CD4-positive, alpha-beta T cell (primary cell): ENCODE measurements at regions of chr1 and their contacts with region 1.

Region 1: GRCh38 chr1:156226116-156226538 is 13.3 kb downstream of the PMF1 start:
- DNase-seq: no peak
- ATAC-seq: no peak
- H3K4me3 ChIP-seq: no peak overlapping the region
- H3K4me3 Mint-ChIP-seq: no peak overlapping the region
- H3K27ac ChIP-seq: no peak overlapping the region
- H3K27ac Mint-ChIP-seq: no peak overlapping the region
- H3K4me1 ChIP-seq: peaks cover 28% of the 10 kb centered on the region
- H3K4me1 Mint-ChIP-seq: peaks cover 29% of the 10 kb centered on the region
- H3K27me3 ChIP-seq: no peaks in the 10 kb centered on the region
- H3K27me3 Mint-ChIP-seq: no peaks in the 10 kb centered on the region
- CTCF ChIP-seq: no peak

Region 2: GRCh38 chr1:156090822-156091188 is 135.3 kb before region 1 on chr1:
- CTCF ChIA-PET with region 1: interaction called, 43 read pairs
- POLR2A ChIA-PET with region 1: interaction called, 3 read pairs
- intact Hi-C with region 1: loop called (anchors 1 kb)
- DNase-seq: peak; percentile 84 to 96 (median 90)
- ATAC-seq: peak; percentile 98
- H3K4me3 ChIP-seq: no peak overlapping the region
- H3K4me3 Mint-ChIP-seq: no peak overlapping the region
- H3K27ac ChIP-seq: no peak overlapping the region
- H3K27ac Mint-ChIP-seq: no peak overlapping the region
- H3K4me1 ChIP-seq: peaks cover 18% of the 10 kb centered on the region
- H3K4me1 Mint-ChIP-seq: peaks cover 3% of the 10 kb centered on the region
- H3K27me3 ChIP-seq: peaks cover 0 to 7% of the 10 kb centered on the region in 2 experiments
- H3K27me3 Mint-ChIP-seq: peaks cover 28% of the 10 kb centered on the region
- CTCF ChIP-seq: peak; percentile 80

Region 3: DNA sequence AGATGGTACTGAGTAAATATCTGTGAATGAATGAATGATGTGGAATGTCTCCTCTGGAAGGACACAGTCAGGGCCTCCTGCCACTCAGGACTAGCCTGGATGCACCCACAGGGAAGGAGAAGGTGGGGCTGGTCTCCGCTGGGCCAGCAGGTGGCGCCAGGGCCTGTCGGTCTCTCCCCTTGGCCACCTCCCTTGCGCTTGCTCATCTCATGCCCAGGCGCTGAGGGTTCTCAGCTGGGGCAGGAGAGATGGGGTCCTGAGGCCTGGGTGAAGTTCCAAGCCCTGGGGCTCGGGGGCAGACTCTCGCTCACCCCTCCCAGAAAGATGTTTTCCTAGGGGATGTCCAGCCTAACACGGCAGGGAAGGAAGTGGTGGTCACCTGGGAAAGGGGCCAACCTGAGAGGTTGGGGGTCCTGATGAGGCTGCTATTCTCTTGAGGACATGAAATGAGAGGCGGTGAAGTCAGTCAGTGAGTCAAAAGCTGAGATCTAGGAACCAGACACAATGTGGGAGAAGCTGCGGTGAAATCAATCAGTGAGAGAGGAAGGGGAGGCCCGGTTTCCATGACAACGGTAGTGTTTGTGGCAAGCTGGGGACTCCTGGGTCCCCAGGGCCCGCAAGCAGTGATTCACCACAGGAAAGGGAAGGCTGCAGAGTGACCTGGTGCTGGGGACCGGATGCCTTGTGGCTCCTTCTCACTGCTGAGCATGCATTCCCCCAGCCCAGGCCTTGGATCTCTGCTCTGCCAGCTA is 129.3 kb before region 1 on chr1:
- CTCF ChIA-PET with region 1: interaction called, 43 read pairs
- POLR2A ChIA-PET with region 1: interaction called, 4 read pairs
- intact Hi-C with region 1: no loop called
- DNase-seq: peak; percentile 73 to 99 (median 83)
- ATAC-seq: peak; percentile 78
- H3K4me3 ChIP-seq: peak overlapping the region; percentile 21
- H3K4me3 Mint-ChIP-seq: peak overlapping the region; percentile 26
- H3K27ac ChIP-seq: peak overlapping the region; percentile 51 to 89
- H3K27ac Mint-ChIP-seq: peak overlapping the region; percentile 82
- H3K4me1 ChIP-seq: peaks cover 39% of the 10 kb centered on the region
- H3K4me1 Mint-ChIP-seq: peaks cover 39% of the 10 kb centered on the region
- H3K27me3 ChIP-seq: no peaks in the 10 kb centered on the region
- H3K27me3 Mint-ChIP-seq: peaks cover 4% of the 10 kb centered on the region
- CTCF ChIP-seq: peak; percentile 93

Region 4: GRCh38 chr1:156129706-156130581 is 96.2 kb before region 1 on chr1:
- CTCF ChIA-PET with region 1: interaction called, 16 read pairs
- POLR2A ChIA-PET with region 1: no interaction called
- intact Hi-C with region 1: no loop called
- DNase-seq: peak; percentile 60 to 87 (median 72)
- ATAC-seq: no peak
- H3K4me3 ChIP-seq: no peak overlapping the region
- H3K4me3 Mint-ChIP-seq: peak overlapping the region; percentile 60
- H3K27ac ChIP-seq: no peak overlapping the region
- H3K27ac Mint-ChIP-seq: peak overlapping the region; percentile 78
- H3K4me1 ChIP-seq: peaks cover 58% of the 10 kb centered on the region
- H3K4me1 Mint-ChIP-seq: peaks cover 50% of the 10 kb centered on the region
- H3K27me3 ChIP-seq: no peaks in the 10 kb centered on the region
- H3K27me3 Mint-ChIP-seq: no peaks in the 10 kb centered on the region
- CTCF ChIP-seq: peak; percentile 92

Region 5: DNA sequence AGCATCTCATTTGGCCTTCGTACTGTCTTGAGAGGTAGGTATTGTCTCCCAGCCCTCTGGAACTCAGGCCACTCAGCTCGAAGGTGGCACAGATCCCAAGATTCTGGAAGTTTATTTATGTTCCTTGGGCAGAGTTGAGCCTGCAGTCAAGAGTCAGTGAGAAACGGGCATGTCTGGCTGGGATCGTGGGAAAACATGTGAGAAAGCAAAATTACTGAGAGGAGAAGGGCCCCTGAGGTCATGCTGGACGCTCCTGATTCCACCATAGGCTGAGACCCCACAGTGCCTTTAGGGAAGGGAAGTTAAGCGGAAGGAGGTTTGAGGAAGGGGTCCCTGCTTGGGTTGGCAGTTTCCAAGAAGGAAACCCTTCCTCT is 85.3 kb before region 1 on chr1:
- CTCF ChIA-PET with region 1: interaction called, 31 read pairs
- POLR2A ChIA-PET with region 1: interaction called, 16 read pairs
- intact Hi-C with region 1: loop called (anchors 1 kb)
- DNase-seq: no peak
- ATAC-seq: peak; percentile 1
- H3K4me3 ChIP-seq: no peak overlapping the region
- H3K4me3 Mint-ChIP-seq: peak overlapping the region; percentile 25
- H3K27ac ChIP-seq: no peak overlapping the region
- H3K27ac Mint-ChIP-seq: peak overlapping the region; percentile 5
- H3K4me1 ChIP-seq: peaks cover 2% of the 10 kb centered on the region
- H3K4me1 Mint-ChIP-seq: peaks cover 2% of the 10 kb centered on the region
- H3K27me3 ChIP-seq: no peaks in the 10 kb centered on the region
- H3K27me3 Mint-ChIP-seq: peaks cover under 1% of the 10 kb centered on the region
- CTCF ChIP-seq: no peak

Region 6: DNA sequence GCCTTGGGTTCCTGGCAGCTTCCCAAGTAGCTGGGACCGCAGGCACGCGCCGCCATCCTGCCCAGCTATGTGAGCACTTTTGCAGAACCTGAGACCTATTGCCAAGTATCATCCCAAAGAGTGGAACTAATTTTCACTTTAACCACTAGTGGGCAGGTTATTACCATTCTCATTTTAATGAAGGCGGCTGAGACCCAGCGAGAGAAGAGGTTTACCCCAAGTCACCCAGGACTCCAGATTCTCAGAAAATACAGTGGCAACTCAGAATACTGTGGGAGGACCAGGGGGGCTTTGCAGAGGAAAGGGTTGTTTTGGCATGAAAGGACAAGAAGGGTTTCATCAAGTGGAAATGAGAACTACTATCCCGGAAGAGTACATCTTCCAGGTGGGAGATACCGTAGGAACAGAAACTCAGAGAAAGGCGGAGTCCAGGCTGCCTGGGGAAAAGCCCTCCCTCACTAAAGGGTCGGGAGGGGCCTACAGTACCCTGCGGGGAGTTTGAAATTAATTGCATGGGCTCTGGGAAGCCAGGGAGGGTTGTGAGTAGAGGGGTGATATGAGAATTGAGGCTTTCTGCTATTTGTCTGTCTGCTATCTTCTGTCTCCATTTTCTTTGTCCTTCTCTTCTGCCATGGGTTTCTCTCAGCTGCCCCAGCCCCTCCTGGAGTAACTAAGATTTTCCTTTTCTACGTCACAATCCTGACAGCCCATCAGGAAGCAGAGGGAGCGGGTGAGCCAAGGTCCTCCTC is 79.9 kb before region 1 on chr1:
- CTCF ChIA-PET with region 1: interaction called, 31 read pairs
- POLR2A ChIA-PET with region 1: interaction called, 16 read pairs
- intact Hi-C with region 1: loop called (anchors 1 kb)
- DNase-seq: peak in 8 of 14 experiments; percentile 25 to 83 (median 47)
- ATAC-seq: peak; percentile 76
- H3K4me3 ChIP-seq: no peak overlapping the region
- H3K4me3 Mint-ChIP-seq: peak overlapping the region; percentile 60
- H3K27ac ChIP-seq: no peak overlapping the region
- H3K27ac Mint-ChIP-seq: peak overlapping the region; percentile 71
- H3K4me1 ChIP-seq: peaks cover 30% of the 10 kb centered on the region
- H3K4me1 Mint-ChIP-seq: peaks cover 24% of the 10 kb centered on the region
- H3K27me3 ChIP-seq: no peaks in the 10 kb centered on the region
- H3K27me3 Mint-ChIP-seq: peaks cover 5% of the 10 kb centered on the region
- CTCF ChIP-seq: peak; percentile 73

Region 7: GRCh38 chr1:156193488-156194299 is 32.4 kb before region 1 on chr1 and contains the start of gene SLC25A44:
- CTCF ChIA-PET with region 1: interaction called, 9 read pairs
- POLR2A ChIA-PET with region 1: interaction called, 4 read pairs
- intact Hi-C with region 1: loop called in 1 of 2 experiments (anchors 5 kb)
- DNase-seq: peak; percentile 92 to 99 (median 97)
- ATAC-seq: peak; percentile 98
- H3K4me3 ChIP-seq: peak within 1 kb of the TSS; percentile 91
- H3K4me3 Mint-ChIP-seq: peak within 1 kb of the TSS; percentile 95
- H3K27ac ChIP-seq: peak within 1 kb of the TSS; percentile 74 to 78
- H3K27ac Mint-ChIP-seq: peak within 1 kb of the TSS; percentile 84
- H3K4me1 ChIP-seq: peaks cover 37% of the 10 kb centered on the region
- H3K4me1 Mint-ChIP-seq: peaks cover 39% of the 10 kb centered on the region
- H3K27me3 ChIP-seq: no peaks in the 10 kb centered on the region
- H3K27me3 Mint-ChIP-seq: no peaks in the 10 kb centered on the region
- CTCF ChIP-seq: peak; percentile 46
- total RNA-seq, gene SLC25A44: 11.6 to 13.0 TPM

Region 8: GRCh38 chr1:156866249-156866909 is 640.3 kb after region 1 on chr1:
- CTCF ChIA-PET with region 1: no interaction called
- POLR2A ChIA-PET with region 1: no interaction called
- intact Hi-C with region 1: no loop called
- DNase-seq: no peak
- ATAC-seq: no peak
- H3K4me3 ChIP-seq: no peak overlapping the region
- H3K4me3 Mint-ChIP-seq: no peak overlapping the region
- H3K27ac ChIP-seq: no peak overlapping the region
- H3K27ac Mint-ChIP-seq: no peak overlapping the region
- H3K4me1 ChIP-seq: peaks cover 16% of the 10 kb centered on the region
- H3K4me1 Mint-ChIP-seq: peaks cover 13% of the 10 kb centered on the region
- H3K27me3 ChIP-seq: peaks cover 31 to 35% of the 10 kb centered on the region in 2 experiments
- H3K27me3 Mint-ChIP-seq: peaks cover 47% of the 10 kb centered on the region
- CTCF ChIP-seq: no peak